GM13976 (cell line): ENCODE measurements at regions of chr6 and their contacts with region 1.

Region 1: DNA sequence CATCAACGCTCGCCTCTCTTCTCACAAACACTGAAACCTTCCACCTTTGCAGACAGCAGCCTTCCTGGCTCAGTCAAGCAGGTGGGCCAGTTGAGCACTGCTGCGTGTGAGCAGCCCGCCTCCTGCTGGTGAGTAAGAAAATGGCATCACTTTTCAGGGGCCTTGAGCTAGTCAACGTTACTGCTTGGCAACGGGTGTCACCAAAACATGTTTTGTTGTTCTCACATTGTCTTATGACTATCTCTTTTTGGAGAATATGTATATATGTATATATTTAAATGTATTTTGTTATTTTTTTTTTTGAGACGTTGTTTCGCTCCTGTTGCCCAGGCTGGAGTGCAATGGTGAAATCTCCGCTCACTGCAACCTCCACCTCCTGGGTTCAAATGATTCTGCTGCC is 97.0 kb upstream of the AGPAT4 start:
- DNase-seq: peak; percentile 79
- CTCF ChIP-seq: peak; percentile 88

Region 2: GRCh38 chr6:160733050-160733646 is 637.7 kb before region 1 on chr6:
- in situ Hi-C with region 1: loop called (anchors 10 kb)
- DNase-seq: peak; percentile 35
- CTCF ChIP-seq: peak; percentile 83

Region 3: DNA sequence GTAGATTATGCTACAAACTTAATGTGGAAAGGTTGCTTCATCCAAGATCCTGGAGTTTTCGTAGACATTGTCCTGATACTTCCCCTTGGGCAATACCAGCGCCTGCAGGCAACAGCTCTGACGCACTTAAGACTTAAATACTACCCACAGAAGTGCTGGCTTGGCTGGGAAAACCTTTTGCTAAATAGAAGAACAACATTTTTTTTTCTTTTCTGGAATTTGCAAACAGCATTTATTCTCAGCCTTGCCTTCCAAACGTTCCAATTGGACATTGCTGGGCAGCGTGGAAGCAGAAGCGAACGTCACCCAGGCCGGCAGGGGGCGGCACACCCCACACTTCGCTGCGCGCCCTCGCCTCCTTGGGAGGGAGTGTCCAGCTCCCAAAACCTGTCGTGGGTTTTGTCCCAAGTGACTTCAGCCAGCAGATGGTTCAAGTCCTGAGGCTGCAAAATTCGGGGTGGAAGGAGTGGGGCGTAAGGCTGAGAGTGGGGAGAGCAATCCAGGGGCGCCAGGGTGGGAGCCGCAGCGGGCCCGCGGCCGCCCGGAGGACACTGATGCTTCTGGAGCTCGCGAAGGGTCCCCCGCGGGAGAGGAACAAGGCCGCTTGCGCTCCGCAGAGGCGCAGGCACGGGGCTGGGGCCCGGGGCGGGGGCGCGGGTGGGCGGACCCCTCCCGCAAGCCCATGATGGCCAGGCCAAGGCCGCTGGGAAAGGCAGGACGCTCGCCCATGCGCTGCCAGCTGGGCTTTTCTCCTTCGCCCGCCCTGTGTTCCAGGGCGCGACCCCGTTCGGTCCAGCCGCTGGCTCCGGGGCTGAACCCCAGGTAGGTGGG is 440.1 kb before region 1 on chr6:
- in situ Hi-C with region 1: loop called (anchors 5 kb)
- DNase-seq: peak; percentile 84
- CTCF ChIP-seq: peak; percentile 84

Region 4: GRCh38 chr6:161091972-161092701 is 278.7 kb before region 1 on chr6:
- in situ Hi-C with region 1: no loop called
- DNase-seq: no peak
- CTCF ChIP-seq: no peak

Region 5: GRCh38 chr6:161139766-161140553 is 230.9 kb before region 1 on chr6:
- in situ Hi-C with region 1: loop called (anchors 10 kb)
- DNase-seq: peak; percentile 70
- CTCF ChIP-seq: no peak